ENCODE measurements at regions of chr17 and their contacts with region 1.

Region 1: GRCh38 chr17:48002266-48002915 is 31.5 kb downstream of the CDK5RAP3 start:
- DNase-seq: no peak
- H3K4me3 ChIP-seq: peak overlapping the region in 1 of 4 experiments; percentile 12; a peak in 3 of 8 replicates
- H3K27ac ChIP-seq: peak overlapping the region; percentile 68
- H3K4me1 ChIP-seq: peaks cover 18 to 41% (median 28%) of the 10 kb centered on the region in 4 experiments
- H3K27me3 ChIP-seq: no peaks in the 10 kb centered on the region
- CTCF ChIP-seq: no peak
- EP300 ChIP-seq: no peak
- POLR2A ChIP-seq: no peak
- RAD21 ChIP-seq: no peak

Region 2: DNA sequence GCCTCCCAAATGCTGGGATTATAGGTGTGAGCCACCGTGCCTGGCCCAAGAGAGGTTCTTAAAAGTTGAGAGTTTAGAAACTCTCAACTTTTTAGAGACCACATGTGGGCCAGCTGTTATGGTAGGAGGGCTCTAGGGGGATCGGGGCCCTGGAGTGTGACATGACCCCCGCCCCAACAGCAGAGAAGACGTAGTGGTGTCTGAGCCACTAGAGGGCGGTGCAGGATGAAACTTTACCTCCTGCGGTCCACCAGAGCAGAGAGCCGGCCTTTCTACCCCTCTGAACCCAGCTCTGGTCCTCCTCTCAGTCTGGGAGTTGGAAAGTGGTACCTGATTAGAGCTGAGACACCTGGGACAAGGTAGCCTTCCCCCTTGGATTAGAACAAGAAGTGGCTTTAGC is 24.1 kb before region 1 on chr17:
- CTCF ChIA-PET with region 1: interaction called, 50 read pairs
- POLR2A ChIA-PET with region 1: interaction called, 3 read pairs
- DNase-seq: peak in 1 of 2 experiments; percentile 83
- H3K4me3 ChIP-seq: no peak overlapping the region
- H3K27ac ChIP-seq: no peak overlapping the region
- H3K4me1 ChIP-seq: no peaks in the 10 kb centered on the region; a peak in 1 of 7 replicates
- H3K27me3 ChIP-seq: no peaks in the 10 kb centered on the region
- CTCF ChIP-seq: peak; percentile 91 to 96 (median 94)
- EP300 ChIP-seq: no peak
- POLR2A ChIP-seq: no peak
- RAD21 ChIP-seq: peak; percentile 92 to 97

Region 3: DNA sequence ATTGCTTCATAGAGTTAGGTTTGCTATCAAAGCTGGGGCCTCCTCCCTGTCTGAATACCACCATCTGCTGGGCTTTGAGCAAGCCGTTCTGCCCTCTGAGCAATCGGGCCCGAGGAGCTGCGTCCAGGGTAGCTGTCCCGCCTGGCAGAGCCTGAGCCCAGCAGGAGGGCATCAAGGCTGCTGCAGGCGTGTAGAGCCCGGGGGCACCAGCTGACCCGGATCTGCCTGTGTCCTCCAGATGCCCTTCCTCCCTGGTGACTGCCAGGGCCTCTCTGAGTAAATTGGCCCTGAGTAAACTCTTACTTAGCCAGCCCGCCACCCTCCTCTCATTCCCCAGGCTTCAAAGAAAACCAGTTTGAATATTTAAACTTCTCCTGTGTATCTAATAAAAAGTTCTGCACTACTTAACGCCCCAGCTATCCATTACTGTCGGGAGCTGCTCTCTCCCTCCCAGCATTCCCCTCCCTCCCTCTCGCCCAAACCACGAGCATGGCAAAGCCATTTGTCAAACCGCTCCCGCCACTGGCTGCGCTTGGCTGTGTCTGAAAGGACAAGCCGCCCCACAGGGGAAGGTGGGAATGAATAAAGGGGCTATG is 15.1 kb before region 1 on chr17:
- CTCF ChIA-PET with region 1: interaction called, 29 read pairs
- POLR2A ChIA-PET with region 1: interaction called, 19 read pairs
- DNase-seq: peak in 1 of 2 experiments; percentile 60
- H3K4me3 ChIP-seq: peak overlapping the region in 2 of 4 experiments; percentile 12 to 19; a peak in 1 of 8 replicates
- H3K27ac ChIP-seq: no peak overlapping the region
- H3K4me1 ChIP-seq: peaks cover 14 to 22% (median 18%) of the 10 kb centered on the region in 4 experiments
- H3K27me3 ChIP-seq: no peaks in the 10 kb centered on the region
- CTCF ChIP-seq: no peak
- EP300 ChIP-seq: no peak
- POLR2A ChIP-seq: no peak
- RAD21 ChIP-seq: no peak

Region 4: GRCh38 chr17:48123111-48123510 is 120.7 kb after region 1 on chr17:
- CTCF ChIA-PET with region 1: no interaction called
- POLR2A ChIA-PET with region 1: no interaction called
- DNase-seq: no peak
- H3K4me3 ChIP-seq: no peak overlapping the region
- H3K27ac ChIP-seq: no peak overlapping the region
- H3K4me1 ChIP-seq: no peaks in the 10 kb centered on the region
- H3K27me3 ChIP-seq: no peaks in the 10 kb centered on the region
- CTCF ChIP-seq: no peak
- EP300 ChIP-seq: no peak
- POLR2A ChIP-seq: no peak
- RAD21 ChIP-seq: no peak